ENCODE measurements at regions of chr12 and their contacts with region 1.

Region 1: GRCh38 chr12:109775172-109775881 is 57.9 kb downstream of the TRPV4 start:
- DNase-seq: peak; percentile 83
- ATAC-seq: peak; percentile 62
- H3K4me3 ChIP-seq: no peak overlapping the region
- H3K27ac ChIP-seq: no peak overlapping the region
- H3K4me1 ChIP-seq: peaks cover 27% of the 10 kb centered on the region
- H3K27me3 ChIP-seq: no peaks in the 10 kb centered on the region
- CTCF ChIP-seq: peak; percentile 99

Region 2: DNA sequence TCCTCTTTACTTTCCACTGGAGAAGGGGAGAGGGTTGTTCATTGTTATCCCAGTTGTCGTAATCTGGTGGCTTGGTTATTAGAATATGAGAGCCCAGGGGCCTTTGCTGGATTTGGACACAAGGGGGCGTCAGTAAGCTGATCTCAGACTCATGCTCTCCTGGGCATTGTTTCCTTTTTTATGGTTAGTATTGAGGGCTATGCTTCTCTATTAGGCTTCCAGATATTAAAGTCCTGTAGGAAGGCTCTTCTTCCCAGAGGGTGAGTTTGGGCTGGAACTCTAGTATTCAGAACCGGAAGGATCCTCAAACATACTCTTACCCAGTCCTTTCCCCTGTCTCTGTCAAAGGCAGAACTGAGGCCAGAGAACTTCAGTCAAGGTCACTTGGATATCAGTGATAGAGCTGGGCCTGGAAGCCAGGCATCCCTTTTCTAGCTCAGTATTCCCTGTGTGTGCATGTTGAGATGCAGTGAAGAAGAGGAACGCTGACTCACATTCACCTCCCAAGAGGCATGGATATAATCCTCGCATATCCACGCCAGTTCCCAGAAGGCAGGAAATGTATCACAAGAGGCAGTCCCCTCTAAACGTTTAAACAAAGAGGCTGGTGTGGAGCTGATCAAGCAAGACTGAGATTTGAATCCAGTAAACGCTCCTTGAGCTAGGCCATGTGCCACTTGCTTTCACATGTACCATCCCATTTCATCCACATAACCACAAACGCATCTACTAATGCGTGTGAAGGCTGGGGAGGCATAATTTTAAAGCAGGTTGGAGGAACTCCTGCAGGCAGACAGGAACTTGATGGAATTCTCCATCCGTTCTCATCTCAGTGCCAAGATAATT is 256.3 kb before region 1 on chr12:
- CTCF ChIA-PET with region 1: no interaction called
- POLR2A ChIA-PET with region 1: no interaction called
- intact Hi-C with region 1: loop called (anchors 1 kb)
- DNase-seq: peak; percentile 77
- ATAC-seq: peak; percentile 91
- H3K4me3 ChIP-seq: no peak overlapping the region
- H3K27ac ChIP-seq: no peak overlapping the region
- H3K4me1 ChIP-seq: no peaks in the 10 kb centered on the region
- H3K27me3 ChIP-seq: no peaks in the 10 kb centered on the region
- CTCF ChIP-seq: peak; percentile 97

Region 3: DNA sequence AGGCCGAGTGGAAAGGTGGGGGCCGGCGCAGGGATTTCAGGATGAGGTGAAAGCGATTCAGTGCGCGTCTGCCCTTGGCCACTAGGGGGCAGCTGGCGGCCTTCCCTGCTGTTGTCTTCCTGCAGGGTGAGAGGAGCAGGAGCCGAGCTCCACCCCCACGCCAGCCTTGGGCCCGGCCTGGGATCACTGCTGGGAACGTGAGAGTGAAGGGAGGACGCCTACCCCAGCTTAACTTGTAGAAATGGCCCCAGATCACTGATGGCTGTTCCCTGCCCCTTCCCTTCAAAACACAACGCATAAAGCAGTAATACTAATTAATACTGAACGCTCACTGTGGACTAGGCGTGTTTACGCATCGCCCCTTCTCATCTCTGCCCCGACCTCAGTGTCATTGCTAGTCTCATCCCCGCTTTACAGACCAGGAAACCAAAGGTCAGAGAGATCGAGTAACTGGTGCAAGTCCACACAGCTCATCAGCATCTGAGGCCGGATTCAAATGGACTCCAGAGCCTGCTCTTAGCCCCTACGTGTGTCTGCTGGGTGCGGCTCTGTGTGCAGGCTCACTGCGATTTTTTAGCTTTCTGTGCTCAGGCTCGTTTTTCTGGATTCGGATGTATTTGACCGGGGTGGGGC is 177.4 kb before region 1 on chr12:
- CTCF ChIA-PET with region 1: interaction called, 28 read pairs
- POLR2A ChIA-PET with region 1: interaction called, 4 read pairs
- intact Hi-C with region 1: loop called (anchors 1 kb)
- DNase-seq: peak; percentile 91
- ATAC-seq: peak; percentile 98
- H3K4me3 ChIP-seq: no peak overlapping the region
- H3K27ac ChIP-seq: no peak overlapping the region
- H3K4me1 ChIP-seq: no peaks in the 10 kb centered on the region
- H3K27me3 ChIP-seq: no peaks in the 10 kb centered on the region
- CTCF ChIP-seq: peak; percentile 98

Region 4: GRCh38 chr12:109719236-109720022 is 55.9 kb before region 1 on chr12:
- CTCF ChIA-PET with region 1: interaction called, 3 read pairs
- POLR2A ChIA-PET with region 1: no interaction called
- intact Hi-C with region 1: loop called (anchors 2 kb)
- DNase-seq: peak; percentile 39
- ATAC-seq: peak; percentile 50
- H3K4me3 ChIP-seq: no peak overlapping the region
- H3K27ac ChIP-seq: no peak overlapping the region
- H3K4me1 ChIP-seq: peaks cover 9% of the 10 kb centered on the region
- H3K27me3 ChIP-seq: no peaks in the 10 kb centered on the region
- CTCF ChIP-seq: peak; percentile 59

Region 5: DNA sequence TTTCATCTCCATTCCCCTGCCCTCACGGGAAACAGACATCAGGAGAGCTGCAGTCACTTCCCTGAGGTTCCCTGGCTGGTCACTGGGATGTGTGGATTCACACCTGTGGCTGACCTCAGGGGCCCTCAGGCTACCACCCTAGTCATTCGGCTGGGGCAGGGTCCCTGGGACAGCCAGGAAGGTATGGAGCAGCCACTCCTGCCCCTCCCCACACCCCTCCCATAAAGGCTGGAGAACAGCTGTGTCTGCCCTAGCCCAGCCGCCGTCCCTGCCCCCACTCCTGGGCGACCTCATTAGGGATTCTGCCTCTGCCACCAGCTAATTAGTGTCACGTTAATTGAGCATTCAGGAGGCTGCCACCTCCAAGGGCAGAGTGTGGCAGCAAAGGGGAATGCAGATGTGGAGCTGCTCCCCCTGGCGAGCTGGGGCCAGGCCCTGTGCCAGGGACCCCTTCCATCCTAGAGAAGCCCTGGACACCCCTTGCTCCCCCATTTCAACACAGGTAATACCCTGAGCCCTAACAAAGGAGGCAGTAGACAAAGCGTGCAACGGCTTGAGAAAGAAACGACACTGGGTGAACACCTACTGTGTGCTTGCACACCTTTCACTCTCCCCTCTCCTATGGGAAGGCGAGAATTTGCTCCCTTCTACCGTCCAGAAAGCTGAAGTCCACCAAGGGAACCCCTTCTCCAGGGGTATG is 16.8 kb before region 1 on chr12:
- CTCF ChIA-PET with region 1: interaction called, 11 read pairs
- POLR2A ChIA-PET with region 1: interaction called, 3 read pairs
- intact Hi-C with region 1: no loop called
- DNase-seq: no peak
- ATAC-seq: no peak
- H3K4me3 ChIP-seq: no peak overlapping the region
- H3K27ac ChIP-seq: no peak overlapping the region
- H3K4me1 ChIP-seq: peaks cover 6% of the 10 kb centered on the region
- H3K27me3 ChIP-seq: no peaks in the 10 kb centered on the region
- CTCF ChIP-seq: no peak

Measured in PC-3 (cell line).